ENCODE measurements at regions of chr13 and their contacts with region 1.

Region 1: GRCh38 chr13:79393564-79394249 is 12.3 kb downstream of the RBM26 start:
- DNase-seq: peak in 3 of 5 donors; percentile 48 to 71 (median 67)
- H3K4me3 ChIP-seq: peak overlapping the region; percentile 66
- H3K4me3 Mint-ChIP-seq: peak overlapping the region; percentile 44 to 84 (median 73)
- H3K27ac ChIP-seq: peak overlapping the region; percentile 18
- H3K27ac Mint-ChIP-seq: peak overlapping the region; percentile 43 to 94 (median 80)
- H3K4me1 ChIP-seq: peaks cover 60% of the 10 kb centered on the region
- H3K4me1 Mint-ChIP-seq: peaks cover 54 to 69% (median 69%) of the 10 kb centered on the region in 3 donors
- H3K27me3 ChIP-seq: no peaks in the 10 kb centered on the region
- H3K27me3 Mint-ChIP-seq: no peaks in the 10 kb centered on the region

Region 2: DNA sequence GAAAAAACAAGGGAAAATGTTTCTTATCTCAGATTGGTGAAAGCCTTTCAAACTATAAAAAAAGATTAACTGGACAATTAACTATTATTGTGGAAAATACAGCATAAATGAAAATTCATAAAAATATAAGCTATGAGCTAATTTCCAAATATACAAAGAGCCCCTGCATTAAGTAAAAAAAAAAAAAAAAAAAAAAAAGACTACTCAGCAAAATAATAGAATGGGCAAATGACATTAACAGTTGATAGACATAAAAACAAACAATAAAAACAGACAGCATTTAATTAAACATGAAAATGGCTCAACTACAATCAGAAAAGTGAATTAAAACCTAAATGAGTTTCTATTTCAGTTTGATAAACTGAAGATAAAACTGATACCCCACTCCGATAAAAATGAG is 65.2 kb before region 1 on chr13:
- CTCF ChIA-PET with region 1: interaction called, 3 read pairs
- POLR2A ChIA-PET with region 1: interaction called, 17 read pairs
- DNase-seq: no peak
- H3K4me3 ChIP-seq: no peak overlapping the region
- H3K4me3 Mint-ChIP-seq: no peak overlapping the region
- H3K27ac ChIP-seq: no peak overlapping the region
- H3K27ac Mint-ChIP-seq: no peak overlapping the region
- H3K4me1 ChIP-seq: no peaks in the 10 kb centered on the region
- H3K4me1 Mint-ChIP-seq: peaks cover 2 to 11% (median 10%) of the 10 kb centered on the region in 3 donors
- H3K27me3 ChIP-seq: no peaks in the 10 kb centered on the region
- H3K27me3 Mint-ChIP-seq: no peaks in the 10 kb centered on the region

Region 3: GRCh38 chr13:79382545-79383289 is 11.0 kb before region 1 on chr13:
- CTCF ChIA-PET with region 1: interaction called, 13 read pairs
- POLR2A ChIA-PET with region 1: no interaction called
- DNase-seq: no peak
- H3K4me3 ChIP-seq: no peak overlapping the region
- H3K4me3 Mint-ChIP-seq: peak overlapping the region; percentile 35 to 70 (median 65)
- H3K27ac ChIP-seq: no peak overlapping the region
- H3K27ac Mint-ChIP-seq: peak overlapping the region; percentile 10 to 96 (median 62)
- H3K4me1 ChIP-seq: peaks cover 36% of the 10 kb centered on the region
- H3K4me1 Mint-ChIP-seq: peaks cover 67 to 88% (median 82%) of the 10 kb centered on the region in 3 donors
- H3K27me3 ChIP-seq: no peaks in the 10 kb centered on the region
- H3K27me3 Mint-ChIP-seq: no peaks in the 10 kb centered on the region

Region 4: GRCh38 chr13:79405829-79406596 is 12.3 kb after region 1 on chr13 and contains the start of gene RBM26:
- CTCF ChIA-PET with region 1: interaction called, 45 read pairs
- POLR2A ChIA-PET with region 1: interaction called, 5 read pairs
- DNase-seq: peak; percentile 90 to 97 (median 93)
- H3K4me3 ChIP-seq: peak within 1 kb of the TSS; percentile 87
- H3K4me3 Mint-ChIP-seq: peak within 1 kb of the TSS in 4 of 7 donors; percentile 91 to 96 (median 94)
- H3K27ac ChIP-seq: peak within 1 kb of the TSS; percentile 94
- H3K27ac Mint-ChIP-seq: peak within 1 kb of the TSS in 7 of 8 donors; percentile 97 to 99 (median 98)
- H3K4me1 ChIP-seq: peaks cover 50% of the 10 kb centered on the region
- H3K4me1 Mint-ChIP-seq: peaks cover 15 to 25% (median 18%) of the 10 kb centered on the region in 3 donors
- H3K27me3 ChIP-seq: no peaks in the 10 kb centered on the region
- H3K27me3 Mint-ChIP-seq: no peaks in the 10 kb centered on the region
- total RNA-seq, gene RBM26: 59.4 to 61.7 TPM

Region 5: GRCh38 chr13:79710376-79710775 is 316.7 kb after region 1 on chr13:
- CTCF ChIA-PET with region 1: no interaction called
- POLR2A ChIA-PET with region 1: no interaction called
- DNase-seq: no peak
- H3K4me3 ChIP-seq: no peak overlapping the region
- H3K4me3 Mint-ChIP-seq: no peak overlapping the region
- H3K27ac ChIP-seq: no peak overlapping the region
- H3K27ac Mint-ChIP-seq: no peak overlapping the region
- H3K4me1 ChIP-seq: no peaks in the 10 kb centered on the region
- H3K4me1 Mint-ChIP-seq: no peaks in the 10 kb centered on the region
- H3K27me3 ChIP-seq: no peaks in the 10 kb centered on the region
- H3K27me3 Mint-ChIP-seq: peaks cover 0 to 3% of the 10 kb centered on the region in 2 donors

Measured in CD8-positive, alpha-beta memory T cell (primary cell).